ENCODE measurements at regions of chr4 and their contacts with region 1.

Region 1: DNA sequence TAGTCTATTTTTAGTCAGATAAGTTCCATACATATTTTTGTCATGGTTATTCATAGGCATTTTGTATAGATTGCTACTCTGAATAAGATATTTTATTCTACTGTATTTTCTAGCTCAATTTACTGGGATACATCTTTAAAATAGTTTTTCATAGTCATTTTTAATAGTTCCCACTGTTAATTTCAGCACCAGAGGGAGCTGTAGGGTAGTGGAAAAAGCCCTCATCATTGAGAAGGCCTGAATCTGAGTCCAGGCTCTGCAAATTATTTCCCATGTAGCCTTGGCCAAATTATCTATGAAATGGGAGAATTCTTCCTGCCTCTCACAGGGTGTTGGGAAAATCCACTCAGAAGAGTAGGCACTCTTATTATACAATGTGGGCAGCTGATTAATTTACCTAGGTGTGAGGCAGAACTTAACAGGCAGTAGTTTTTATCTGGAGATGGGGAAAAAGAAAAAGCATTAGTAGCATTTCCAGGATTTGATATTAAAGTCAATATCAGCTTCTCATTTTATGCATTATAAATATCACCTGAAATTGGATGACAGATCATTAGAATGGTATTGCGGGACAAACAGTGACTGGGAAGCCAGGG is 102.9 kb upstream of the PAQR3 start:
- DNase-seq: no peak
- H3K4me3 ChIP-seq: no peak overlapping the region
- H3K27ac ChIP-seq: no peak overlapping the region
- H3K4me1 ChIP-seq: no peaks in the 10 kb centered on the region
- H3K27me3 ChIP-seq: no peaks in the 10 kb centered on the region
- CTCF ChIP-seq: peak in 2 of 3 experiments; percentile 46 to 49; a peak in 3 of 4 replicates
- EP300 ChIP-seq: no peak
- POLR2A ChIP-seq: no peak
- RAD21 ChIP-seq: peak; percentile 81 to 82

Region 2: DNA sequence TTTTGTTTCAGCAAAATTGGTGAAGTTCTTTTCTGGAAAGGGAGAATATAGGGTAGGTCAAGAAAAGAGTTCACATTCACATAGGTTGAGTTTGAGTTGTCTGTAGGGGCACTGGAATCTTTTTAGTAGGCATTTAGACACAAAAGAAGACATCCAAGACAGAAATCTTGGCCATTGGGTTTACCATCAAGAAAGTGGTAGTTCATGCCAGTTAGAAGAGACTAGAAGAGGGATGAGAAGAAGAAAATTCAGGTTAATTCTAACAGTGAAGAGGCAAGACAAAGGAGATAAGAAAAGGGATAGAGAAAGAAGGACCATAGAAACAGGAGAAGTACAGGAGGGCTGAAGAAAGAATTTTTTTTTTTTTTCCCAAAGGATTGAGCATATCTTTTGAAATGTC is 142.9 kb before region 1 on chr4:
- CTCF ChIA-PET with region 1: no interaction called
- POLR2A ChIA-PET with region 1: no interaction called
- DNase-seq: no peak
- H3K4me3 ChIP-seq: no peak overlapping the region
- H3K27ac ChIP-seq: no peak overlapping the region
- H3K4me1 ChIP-seq: no peaks in the 10 kb centered on the region
- H3K27me3 ChIP-seq: no peaks in the 10 kb centered on the region
- CTCF ChIP-seq: no peak
- EP300 ChIP-seq: no peak
- POLR2A ChIP-seq: no peak
- RAD21 ChIP-seq: no peak

Region 3: DNA sequence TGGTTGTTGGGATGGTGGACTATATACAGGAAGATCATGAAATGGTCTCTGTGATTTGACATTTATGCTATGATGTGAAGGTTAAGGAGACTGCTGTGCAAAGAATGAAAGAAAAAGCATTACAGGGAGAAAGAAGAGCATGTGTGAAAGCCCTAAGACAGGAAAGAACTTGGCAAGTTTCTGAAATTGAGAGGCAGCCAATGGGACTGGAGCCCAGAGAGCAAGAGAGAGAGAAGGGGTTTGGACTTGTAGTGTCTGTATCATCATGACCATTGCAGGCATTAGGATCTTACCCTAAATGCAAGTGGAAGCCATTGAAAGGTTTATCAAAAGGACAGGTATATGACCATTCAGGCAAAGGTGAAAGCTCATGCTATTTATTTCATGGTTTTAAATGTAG is 136.6 kb after region 1 on chr4:
- CTCF ChIA-PET with region 1: no interaction called
- POLR2A ChIA-PET with region 1: no interaction called
- DNase-seq: no peak
- H3K4me3 ChIP-seq: no peak overlapping the region
- H3K27ac ChIP-seq: no peak overlapping the region
- H3K4me1 ChIP-seq: no peaks in the 10 kb centered on the region
- H3K27me3 ChIP-seq: no peaks in the 10 kb centered on the region
- CTCF ChIP-seq: no peak
- EP300 ChIP-seq: no peak
- POLR2A ChIP-seq: no peak
- RAD21 ChIP-seq: no peak

Region 4: DNA sequence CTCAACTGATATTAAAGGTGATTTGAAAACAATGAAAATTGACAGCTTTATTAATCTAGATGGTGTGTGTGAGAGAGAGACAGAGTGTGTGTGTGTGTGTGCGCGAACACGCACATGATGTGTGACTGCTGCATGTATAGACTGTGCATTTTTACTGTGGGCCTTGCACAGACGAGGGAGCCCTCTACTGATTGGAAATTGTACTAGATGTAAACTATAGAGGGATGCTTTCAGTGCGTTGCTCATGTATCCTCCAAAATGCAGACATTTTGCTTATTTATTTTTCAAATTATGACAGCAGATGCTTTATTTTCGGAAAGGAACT is 534.2 kb after region 1 on chr4:
- CTCF ChIA-PET with region 1: interaction called, 12 read pairs
- POLR2A ChIA-PET with region 1: no interaction called
- DNase-seq: no peak
- H3K4me3 ChIP-seq: no peak overlapping the region
- H3K27ac ChIP-seq: no peak overlapping the region
- H3K4me1 ChIP-seq: peaks cover 0 to 2% (median 0%) of the 10 kb centered on the region in 4 experiments; a peak in 3 of 7 replicates
- H3K27me3 ChIP-seq: no peaks in the 10 kb centered on the region
- CTCF ChIP-seq: peak in 2 of 3 experiments; percentile 15 to 54; a peak in 2 of 4 replicates
- EP300 ChIP-seq: no peak
- POLR2A ChIP-seq: no peak
- RAD21 ChIP-seq: peak; percentile 74 to 76